ENCODE measurements at regions of chrX and their contacts with region 1.

Region 1: GRCh38 chrX:1391707-1392375 is at the start of gene SLC25A6:
- DNase-seq: peak; percentile 100
- ATAC-seq: peak; percentile 96
- H3K4me3 Mint-ChIP-seq: peak within 1 kb of the TSS; percentile 93
- H3K27ac Mint-ChIP-seq: peak within 1 kb of the TSS; percentile 93
- H3K4me1 Mint-ChIP-seq: peaks cover 47% of the 10 kb centered on the region
- H3K27me3 Mint-ChIP-seq: no peaks in the 10 kb centered on the region
- CTCF ChIP-seq: no peak
- total RNA-seq, gene SLC25A6: 436 and 472 TPM in 2 replicates

Region 2: GRCh38 chrX:318739-319578 is 1072.9 kb before region 1 on chrX and contains the start of gene GTPBP6:
- CTCF ChIA-PET with region 1: no interaction called
- POLR2A ChIA-PET with region 1: no interaction called
- intact Hi-C with region 1: loop called (anchors 2 kb)
- DNase-seq: peak; percentile 97
- ATAC-seq: peak; percentile 75
- H3K4me3 Mint-ChIP-seq: peak within 1 kb of the TSS; percentile 94
- H3K27ac Mint-ChIP-seq: peak within 1 kb of the TSS; percentile 98
- H3K4me1 Mint-ChIP-seq: peaks cover 32% of the 10 kb centered on the region
- H3K27me3 Mint-ChIP-seq: no peaks in the 10 kb centered on the region
- CTCF ChIP-seq: no peak
- total RNA-seq, gene GTPBP6: 69.9 and 75.6 TPM in 2 replicates

Region 3: DNA sequence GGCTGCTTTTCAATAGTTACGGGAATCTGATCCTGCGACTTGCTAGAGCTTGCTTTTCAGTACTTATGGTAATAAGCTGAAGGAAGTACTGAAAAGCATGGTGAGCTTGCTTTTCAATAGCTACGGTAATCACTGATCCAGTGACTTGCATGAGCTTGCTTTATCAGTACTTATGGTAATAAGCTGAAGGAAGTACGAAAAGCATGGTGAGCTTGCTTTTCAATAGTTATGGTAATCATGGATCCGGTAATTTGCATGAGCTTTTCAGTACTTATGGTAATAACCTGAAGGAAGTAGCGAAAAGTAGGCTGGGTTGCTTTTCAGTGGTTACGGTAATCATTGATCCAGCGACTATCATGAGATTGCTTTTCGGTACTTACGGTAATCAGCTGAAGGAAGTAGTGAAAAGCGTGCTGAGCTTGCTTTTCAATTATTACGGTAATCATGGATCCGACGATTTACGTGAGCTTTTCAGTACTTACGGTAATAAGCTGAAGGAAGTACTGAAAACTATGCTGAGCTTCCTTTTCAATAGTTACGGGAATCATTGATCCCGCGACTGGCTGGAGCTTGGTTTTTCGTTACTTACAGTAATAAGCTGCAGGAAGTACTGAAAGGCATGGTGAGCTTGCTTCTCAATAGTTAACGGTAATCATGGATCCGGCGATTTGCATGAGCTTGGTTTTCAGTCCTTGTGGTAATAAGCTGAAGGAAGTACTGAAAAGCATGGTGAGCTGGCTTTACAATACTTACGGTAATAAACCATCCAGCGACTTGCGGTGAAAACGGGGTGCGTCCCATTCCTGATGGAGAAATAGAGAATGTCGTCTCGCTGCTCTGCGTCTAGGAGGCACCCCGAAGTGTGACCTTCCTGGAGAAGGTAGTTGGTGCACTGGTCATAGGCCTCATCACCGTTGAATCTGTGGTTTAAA is 185.9 kb before region 1 on chrX:
- CTCF ChIA-PET with region 1: no interaction called
- POLR2A ChIA-PET with region 1: no interaction called
- intact Hi-C with region 1: loop called (anchors 2 kb)
- DNase-seq: no peak
- ATAC-seq: peak; percentile 77
- H3K4me3 Mint-ChIP-seq: peak overlapping the region; percentile 76
- H3K27ac Mint-ChIP-seq: no peak overlapping the region
- H3K4me1 Mint-ChIP-seq: peaks cover 17% of the 10 kb centered on the region
- H3K27me3 Mint-ChIP-seq: peaks cover 5% of the 10 kb centered on the region
- CTCF ChIP-seq: no peak

Region 4: GRCh38 chrX:1411291-1411720 is 19.5 kb after region 1 on chrX:
- CTCF ChIA-PET with region 1: no interaction called
- POLR2A ChIA-PET with region 1: no interaction called
- intact Hi-C with region 1: no loop called
- DNase-seq: no peak
- ATAC-seq: peak; percentile 68
- H3K4me3 Mint-ChIP-seq: no peak overlapping the region
- H3K27ac Mint-ChIP-seq: no peak overlapping the region
- H3K4me1 Mint-ChIP-seq: peaks cover 6% of the 10 kb centered on the region
- H3K27me3 Mint-ChIP-seq: no peaks in the 10 kb centered on the region
- CTCF ChIP-seq: no peak

Region 5: DNA sequence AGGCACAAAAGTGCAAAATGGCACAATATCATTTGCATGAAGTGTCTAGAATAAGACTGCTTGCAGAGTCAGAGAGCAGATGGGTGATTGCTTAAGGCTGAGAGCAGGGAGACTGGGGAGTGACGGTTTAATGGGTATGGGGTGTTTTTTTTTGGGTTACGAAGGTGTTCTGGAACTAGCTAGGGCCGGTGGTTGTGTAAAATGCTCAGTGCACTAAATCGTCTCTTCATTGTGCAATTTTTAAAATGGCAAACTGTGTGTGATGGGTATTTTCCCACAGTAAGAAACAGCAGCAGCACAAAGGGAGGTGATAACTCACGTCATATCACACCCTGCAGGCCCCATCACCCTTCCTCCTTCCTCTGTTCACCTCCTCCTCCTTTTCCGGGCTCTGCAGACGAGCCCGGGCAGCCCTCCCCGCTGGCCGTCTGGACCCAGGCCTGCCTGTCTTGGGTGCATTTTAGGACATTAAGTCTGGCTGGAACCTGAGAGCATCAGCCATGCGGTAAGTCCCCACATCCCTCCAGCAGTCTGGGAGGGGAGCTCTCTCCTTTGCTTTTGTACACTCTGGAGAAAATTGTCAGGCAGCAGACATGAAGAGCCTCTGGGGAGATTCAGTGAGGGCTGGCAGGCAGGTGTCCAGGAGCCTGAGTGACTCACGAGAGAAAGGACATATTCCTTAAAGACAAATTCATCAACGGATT is 265.7 kb after region 1 on chrX:
- CTCF ChIA-PET with region 1: no interaction called
- POLR2A ChIA-PET with region 1: no interaction called
- intact Hi-C with region 1: loop called (anchors 1 kb)
- DNase-seq: peak; percentile 18
- ATAC-seq: no peak
- H3K4me3 Mint-ChIP-seq: peak overlapping the region; percentile 80
- H3K27ac Mint-ChIP-seq: peak overlapping the region; percentile 81
- H3K4me1 Mint-ChIP-seq: peaks cover 27% of the 10 kb centered on the region
- H3K27me3 Mint-ChIP-seq: no peaks in the 10 kb centered on the region
- CTCF ChIP-seq: no peak

Region 6: DNA sequence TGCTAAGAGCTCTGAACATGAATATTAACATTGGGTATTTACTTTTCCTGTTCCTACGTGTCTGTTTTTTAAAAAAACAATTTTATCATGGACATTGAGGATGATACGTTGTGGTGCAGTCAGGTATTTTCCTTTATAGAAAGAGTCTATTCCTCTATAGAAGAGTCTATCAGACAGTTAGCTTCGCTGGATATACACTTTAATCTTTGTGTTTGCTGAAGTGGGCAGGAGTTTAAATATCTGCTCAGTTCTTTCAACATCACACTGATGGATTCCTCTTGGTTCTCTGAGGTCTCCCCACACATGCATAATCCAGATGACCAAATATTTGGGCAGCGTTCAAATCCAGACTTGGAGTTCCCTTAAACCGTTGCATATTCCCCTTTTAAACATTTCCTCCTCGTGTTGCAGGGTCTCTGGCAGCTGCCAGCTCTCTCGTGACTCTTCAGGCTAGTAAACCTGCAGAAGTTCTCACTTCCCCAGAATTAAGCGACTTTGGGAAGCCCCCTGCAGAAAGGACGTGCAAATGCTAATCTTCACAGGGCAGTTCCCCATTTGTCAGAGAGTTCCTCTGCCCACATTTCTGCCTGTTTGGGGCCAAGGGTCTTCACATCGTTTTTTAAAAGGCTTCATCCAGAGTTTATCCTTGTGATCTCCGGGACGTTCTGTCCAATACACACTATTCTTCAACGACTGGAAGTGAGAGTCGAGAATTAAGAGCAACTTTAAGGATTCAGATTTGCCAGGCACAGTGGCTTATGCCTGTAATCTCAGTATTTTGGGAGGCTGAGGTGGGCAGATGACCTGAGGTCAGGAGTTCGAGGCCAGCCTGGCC is 1129.5 kb after region 1 on chrX:
- CTCF ChIA-PET with region 1: no interaction called
- POLR2A ChIA-PET with region 1: no interaction called
- intact Hi-C with region 1: loop called (anchors 5 kb)
- DNase-seq: peak; percentile 34
- ATAC-seq: peak; percentile 88
- H3K4me3 Mint-ChIP-seq: peak overlapping the region; percentile 71
- H3K27ac Mint-ChIP-seq: no peak overlapping the region
- H3K4me1 Mint-ChIP-seq: peaks cover 28% of the 10 kb centered on the region
- H3K27me3 Mint-ChIP-seq: no peaks in the 10 kb centered on the region
- CTCF ChIP-seq: no peak

Region 7: DNA sequence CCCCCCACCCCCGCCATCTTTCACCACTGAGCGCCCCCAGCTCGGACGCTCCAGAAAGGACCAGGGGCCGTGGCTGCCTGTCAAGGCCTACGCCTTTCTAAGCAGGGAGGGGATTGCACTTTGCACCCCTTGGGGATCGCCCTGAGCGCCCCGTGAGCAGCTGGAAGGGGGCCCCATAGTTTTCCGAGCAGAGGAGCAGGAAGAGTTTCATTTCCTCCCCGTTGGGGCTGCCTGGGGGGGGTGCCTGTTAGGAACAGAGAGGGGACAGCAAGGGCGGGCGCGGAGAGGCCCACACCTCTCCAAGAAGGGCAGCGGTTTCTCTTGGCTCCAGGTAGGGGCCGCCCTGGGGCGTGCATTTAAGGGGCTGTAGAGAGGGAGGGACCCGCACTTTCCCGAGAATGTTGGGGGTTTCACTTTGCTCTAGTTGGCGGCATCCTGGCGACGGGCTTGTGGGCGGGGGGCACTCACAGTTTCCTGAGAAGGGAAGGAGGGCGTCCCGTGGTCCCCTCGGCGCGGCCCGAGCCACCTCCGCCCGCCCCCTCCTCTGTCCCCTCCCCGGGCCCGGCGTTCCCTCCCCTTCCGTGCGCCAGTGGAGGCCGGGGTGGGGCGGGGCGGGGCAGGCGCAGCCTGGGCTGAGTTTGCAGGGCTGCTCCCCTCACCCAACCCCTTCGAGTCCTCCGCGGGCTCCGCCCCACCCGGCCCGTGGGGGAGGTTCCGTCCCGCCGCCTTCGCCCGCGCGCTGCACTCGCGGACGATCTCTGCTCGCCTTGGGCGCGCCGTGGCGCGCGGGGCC is 1217.0 kb after region 1 on chrX:
- CTCF ChIA-PET with region 1: no interaction called
- POLR2A ChIA-PET with region 1: no interaction called
- intact Hi-C with region 1: loop called (anchors 1 kb)
- DNase-seq: peak; percentile 84
- ATAC-seq: peak; percentile 97
- H3K4me3 Mint-ChIP-seq: peak overlapping the region; percentile 93
- H3K27ac Mint-ChIP-seq: peak overlapping the region; percentile 81
- H3K4me1 Mint-ChIP-seq: peaks cover 36% of the 10 kb centered on the region
- H3K27me3 Mint-ChIP-seq: no peaks in the 10 kb centered on the region
- CTCF ChIP-seq: no peak

Measured in activated B cell treated with CpG ODN at 0.5 μM for 24 hours (primary cell).